CD8-positive, alpha-beta T cell (primary cell): ENCODE measurements at regions of chr6 and their contacts with region 1.

Region 1: DNA sequence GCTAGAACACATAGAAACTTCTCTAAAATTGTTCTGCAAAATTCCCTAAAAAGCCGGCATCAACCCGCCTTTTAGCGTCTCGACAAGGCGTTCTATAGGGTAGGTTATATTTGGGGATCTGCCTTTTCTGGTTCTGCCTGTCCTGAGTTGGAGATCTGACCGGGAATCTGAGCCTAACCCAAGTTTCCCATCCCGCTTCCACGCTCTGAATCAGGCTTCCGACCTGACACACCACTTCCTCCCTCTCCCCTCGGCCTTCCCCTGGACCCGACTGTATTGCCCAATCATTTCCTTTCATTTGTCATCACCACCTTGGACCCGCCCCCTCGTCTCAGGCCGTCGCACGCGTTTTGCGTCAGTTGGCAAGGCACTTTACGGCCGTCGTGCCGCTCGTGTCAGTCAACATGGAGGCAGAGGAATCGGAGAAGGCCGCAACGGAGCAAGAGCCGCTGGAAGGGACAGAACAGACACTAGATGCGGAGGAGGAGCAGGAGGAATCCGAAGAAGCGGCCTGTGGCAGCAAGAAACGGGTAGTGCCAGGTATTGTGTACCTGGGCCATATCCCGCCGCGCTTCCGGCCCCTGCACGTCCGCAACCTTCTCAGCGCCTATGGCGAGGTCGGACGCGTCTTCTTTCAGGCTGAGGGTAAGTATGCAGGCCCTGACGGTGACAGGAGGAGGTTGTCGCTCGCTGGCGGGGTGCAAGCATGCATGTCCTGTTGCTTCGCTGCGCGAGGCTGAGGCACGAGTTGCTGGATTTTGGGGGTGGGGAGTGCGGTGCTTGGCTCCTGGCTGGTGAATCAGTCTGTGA is at the start of gene ABT1:
- DNase-seq: peak; percentile 94 to 99 (median 97)
- ATAC-seq: peak; percentile 85
- H3K4me3 ChIP-seq: peak within 1 kb of the TSS; percentile 93 to 94
- H3K4me3 Mint-ChIP-seq: no peak within 1 kb of the TSS
- H3K27ac ChIP-seq: peak within 1 kb of the TSS; percentile 90 to 94
- H3K27ac Mint-ChIP-seq: no peak within 1 kb of the TSS
- H3K4me1 ChIP-seq: peaks cover 18% of the 10 kb centered on the region
- H3K4me1 Mint-ChIP-seq: peaks cover 23% of the 10 kb centered on the region
- H3K27me3 ChIP-seq: peaks cover 0 to 4% of the 10 kb centered on the region in 2 experiments
- H3K27me3 Mint-ChIP-seq: peaks cover 10% of the 10 kb centered on the region
- CTCF ChIP-seq: no peak
- total RNA-seq, gene ABT1: 42.5 to 44.2 TPM

Region 2: GRCh38 chr6:25962149-25963127 is 634.3 kb before region 1 on chr6 and contains the start of gene TRIM38:
- CTCF ChIA-PET with region 1: no interaction called
- POLR2A ChIA-PET with region 1: no interaction called
- intact Hi-C with region 1: loop called in 1 of 2 experiments (anchors 5 kb)
- DNase-seq: peak; percentile 50 to 95 (median 77)
- ATAC-seq: peak; percentile 86
- H3K4me3 ChIP-seq: peak within 1 kb of the TSS; percentile 76 to 86
- H3K4me3 Mint-ChIP-seq: peak within 1 kb of the TSS; percentile 95
- H3K27ac ChIP-seq: peak within 1 kb of the TSS; percentile 91 to 95
- H3K27ac Mint-ChIP-seq: peak within 1 kb of the TSS; percentile 98
- H3K4me1 ChIP-seq: peaks cover 64% of the 10 kb centered on the region
- H3K4me1 Mint-ChIP-seq: peaks cover 81% of the 10 kb centered on the region
- H3K27me3 ChIP-seq: no peaks in the 10 kb centered on the region
- H3K27me3 Mint-ChIP-seq: no peaks in the 10 kb centered on the region
- CTCF ChIP-seq: no peak
- total RNA-seq, gene TRIM38: 13.2 to 13.6 TPM

Region 3: DNA sequence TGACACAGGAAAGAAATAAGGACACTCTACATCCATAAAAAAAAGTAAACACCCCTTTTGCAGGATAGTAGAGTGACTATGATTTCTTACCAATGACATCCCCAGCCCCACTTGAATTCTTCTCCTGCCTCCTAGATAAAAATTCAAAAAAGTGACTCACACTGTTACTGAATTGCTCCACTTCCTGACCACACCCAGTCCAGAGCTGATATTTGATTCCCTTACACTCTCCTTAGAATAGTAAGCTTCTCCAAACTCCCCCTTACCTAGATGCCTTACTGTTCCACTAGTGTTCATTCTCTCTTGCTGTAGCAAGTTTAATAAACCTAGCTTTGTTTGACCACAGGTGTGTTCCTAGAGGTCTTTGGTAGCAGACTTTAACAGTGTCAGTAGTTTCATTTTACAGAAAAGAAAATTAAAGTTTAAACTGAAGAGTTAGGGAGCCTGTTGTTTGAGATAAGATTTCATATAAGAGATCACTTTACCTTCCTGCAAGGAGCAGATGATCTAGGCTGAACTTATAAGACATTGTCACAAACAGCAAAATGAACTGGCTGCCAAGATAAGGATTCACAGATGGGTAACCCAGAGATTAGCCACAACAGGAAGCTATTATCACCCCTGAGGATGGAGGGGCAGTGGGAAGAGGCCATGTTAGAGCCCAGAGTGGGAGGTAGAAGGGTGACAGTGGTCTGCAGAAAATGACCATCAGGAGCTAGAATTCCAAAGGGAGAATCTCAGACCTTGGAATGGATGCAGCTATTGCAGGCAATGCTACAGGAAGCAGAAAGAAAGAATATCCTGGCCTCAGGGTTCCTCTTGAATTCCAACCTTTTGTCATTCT is 260.2 kb before region 1 on chr6:
- CTCF ChIA-PET with region 1: interaction called, 85 read pairs
- POLR2A ChIA-PET with region 1: interaction called, 6 read pairs
- intact Hi-C with region 1: loop called (anchors 1 kb)
- DNase-seq: no peak
- ATAC-seq: no peak
- H3K4me3 ChIP-seq: no peak overlapping the region
- H3K4me3 Mint-ChIP-seq: no peak overlapping the region
- H3K27ac ChIP-seq: no peak overlapping the region
- H3K27ac Mint-ChIP-seq: peak overlapping the region; percentile 49
- H3K4me1 ChIP-seq: peaks cover 5% of the 10 kb centered on the region
- H3K4me1 Mint-ChIP-seq: peaks cover 26% of the 10 kb centered on the region
- H3K27me3 ChIP-seq: peaks cover 3 to 11% of the 10 kb centered on the region in 2 experiments
- H3K27me3 Mint-ChIP-seq: peaks cover 5% of the 10 kb centered on the region
- CTCF ChIP-seq: no peak

Region 4: GRCh38 chr6:26482340-26482739 is 114.4 kb before region 1 on chr6:
- CTCF ChIA-PET with region 1: no interaction called
- POLR2A ChIA-PET with region 1: no interaction called
- intact Hi-C with region 1: no loop called
- DNase-seq: no peak
- ATAC-seq: no peak
- H3K4me3 ChIP-seq: no peak overlapping the region
- H3K4me3 Mint-ChIP-seq: no peak overlapping the region
- H3K27ac ChIP-seq: no peak overlapping the region
- H3K27ac Mint-ChIP-seq: no peak overlapping the region
- H3K4me1 ChIP-seq: peaks cover 4% of the 10 kb centered on the region
- H3K4me1 Mint-ChIP-seq: peaks cover 4% of the 10 kb centered on the region
- H3K27me3 ChIP-seq: no peaks in the 10 kb centered on the region
- H3K27me3 Mint-ChIP-seq: no peaks in the 10 kb centered on the region
- CTCF ChIP-seq: no peak

Region 5: DNA sequence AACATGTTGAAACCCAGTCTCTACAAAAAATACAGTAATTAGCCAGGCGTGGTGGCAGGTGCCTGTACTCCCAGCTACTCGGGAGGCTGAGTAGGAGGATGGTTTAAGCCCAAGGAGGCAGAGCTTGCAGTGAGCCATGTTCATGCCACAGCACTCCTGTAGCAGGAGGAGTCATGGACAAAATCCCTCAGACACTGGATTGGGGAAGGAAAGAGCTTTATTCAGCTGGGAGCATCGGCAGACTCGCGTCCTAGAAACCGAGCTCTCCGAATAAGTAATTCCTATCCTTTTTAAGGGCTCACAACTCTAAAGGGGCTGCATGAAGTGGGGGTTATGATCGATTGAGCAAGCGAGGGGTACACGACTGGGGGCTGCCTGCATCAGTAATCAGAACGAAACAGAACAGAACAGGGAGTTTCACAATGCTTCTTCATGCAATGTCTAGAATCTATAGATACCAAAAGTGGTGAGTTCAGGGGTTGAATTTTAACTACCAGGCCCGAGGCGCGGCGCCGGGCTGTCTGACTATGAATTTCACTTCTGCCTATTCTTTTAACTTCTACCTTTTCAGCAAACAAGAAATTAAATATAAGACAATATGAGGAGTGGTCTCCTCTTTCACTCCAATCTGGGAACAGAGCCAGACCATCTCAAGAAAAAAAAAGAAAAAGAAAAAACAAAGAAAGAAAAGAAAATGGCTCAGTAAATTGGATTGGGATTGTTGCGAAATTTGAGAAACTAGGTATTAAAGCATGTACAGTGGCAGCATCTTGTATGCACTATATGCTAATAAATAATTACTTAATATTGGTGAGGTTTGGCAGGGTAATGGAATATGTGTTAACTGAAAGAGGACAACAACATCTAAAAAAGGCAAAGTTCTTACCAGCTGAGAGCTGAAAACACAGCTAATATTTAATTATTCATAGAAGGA is 35.0 kb before region 1 on chr6:
- CTCF ChIA-PET with region 1: interaction called, 12 read pairs
- POLR2A ChIA-PET with region 1: no interaction called
- intact Hi-C with region 1: no loop called
- DNase-seq: no peak
- ATAC-seq: no peak
- H3K4me3 ChIP-seq: no peak overlapping the region
- H3K4me3 Mint-ChIP-seq: no peak overlapping the region
- H3K27ac ChIP-seq: no peak overlapping the region
- H3K27ac Mint-ChIP-seq: no peak overlapping the region
- H3K4me1 ChIP-seq: no peaks in the 10 kb centered on the region
- H3K4me1 Mint-ChIP-seq: peaks cover 3% of the 10 kb centered on the region
- H3K27me3 ChIP-seq: no peaks in the 10 kb centered on the region
- H3K27me3 Mint-ChIP-seq: no peaks in the 10 kb centered on the region
- CTCF ChIP-seq: no peak

Region 6: GRCh38 chr6:26576929-26577719 is 19.7 kb before region 1 on chr6:
- CTCF ChIA-PET with region 1: interaction called, 61 read pairs
- POLR2A ChIA-PET with region 1: interaction called, 4 read pairs
- intact Hi-C with region 1: loop called (anchors 1 kb)
- DNase-seq: peak in 5 of 9 experiments; percentile 53 to 80 (median 59)
- ATAC-seq: peak; percentile 35
- H3K4me3 ChIP-seq: peak overlapping the region; percentile 37 to 53
- H3K4me3 Mint-ChIP-seq: peak overlapping the region; percentile 84
- H3K27ac ChIP-seq: no peak overlapping the region
- H3K27ac Mint-ChIP-seq: peak overlapping the region; percentile 75
- H3K4me1 ChIP-seq: peaks cover 11% of the 10 kb centered on the region
- H3K4me1 Mint-ChIP-seq: peaks cover 25% of the 10 kb centered on the region
- H3K27me3 ChIP-seq: no peaks in the 10 kb centered on the region
- H3K27me3 Mint-ChIP-seq: no peaks in the 10 kb centered on the region
- CTCF ChIP-seq: no peak

Region 7: GRCh38 chr6:27864906-27865849 is 1268.4 kb after region 1 on chr6:
- CTCF ChIA-PET with region 1: no interaction called
- POLR2A ChIA-PET with region 1: no interaction called
- intact Hi-C with region 1: loop called in 1 of 2 experiments (anchors 2 kb)
- DNase-seq: peak; percentile 37 to 97 (median 56)
- ATAC-seq: peak; percentile 83
- H3K4me3 ChIP-seq: peak overlapping the region; percentile 71 to 79
- H3K4me3 Mint-ChIP-seq: peak overlapping the region; percentile 95
- H3K27ac ChIP-seq: peak overlapping the region; percentile 67 to 83
- H3K27ac Mint-ChIP-seq: peak overlapping the region; percentile 94
- H3K4me1 ChIP-seq: peaks cover 17% of the 10 kb centered on the region
- H3K4me1 Mint-ChIP-seq: peaks cover 38% of the 10 kb centered on the region
- H3K27me3 ChIP-seq: no peaks in the 10 kb centered on the region
- H3K27me3 Mint-ChIP-seq: no peaks in the 10 kb centered on the region
- CTCF ChIP-seq: no peak